Caco-2 (cell line): ENCODE measurements at regions of chr18 and their contacts with region 1.

Region 1: DNA sequence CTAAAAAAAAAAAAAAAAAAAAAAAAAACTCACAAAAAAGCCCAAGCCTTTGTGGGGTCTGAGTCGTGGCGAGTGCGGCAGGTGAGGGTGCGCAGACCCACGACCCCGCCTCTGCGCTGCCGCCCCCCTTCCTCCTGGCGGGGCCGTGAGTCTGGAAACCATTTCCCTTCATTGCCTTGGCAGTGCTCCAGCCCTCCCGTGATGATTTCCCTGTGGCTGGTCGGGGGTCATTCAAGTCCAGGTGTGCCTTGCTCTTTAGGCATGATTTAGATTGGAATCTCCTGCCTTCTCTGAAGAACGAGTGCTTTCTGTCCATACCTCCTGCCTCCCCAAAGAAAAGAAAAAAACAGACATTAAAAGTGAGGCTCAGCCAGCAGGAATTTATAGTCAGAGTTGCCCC is 161.8 kb downstream of the FAM210A start:
- DNase-seq: no peak
- H3K4me3 ChIP-seq: no peak overlapping the region
- H3K4me3 Mint-ChIP-seq: no peak overlapping the region
- H3K27ac Mint-ChIP-seq: no peak overlapping the region
- H3K4me1 ChIP-seq: no peaks in the 10 kb centered on the region
- H3K4me1 Mint-ChIP-seq: no peaks in the 10 kb centered on the region
- H3K27me3 ChIP-seq: no peaks in the 10 kb centered on the region
- H3K27me3 Mint-ChIP-seq: peaks cover 9% of the 10 kb centered on the region
- CTCF ChIP-seq: no peak

Region 2: GRCh38 chr18:13217466-13217961 is 347.1 kb before region 1 on chr18:
- CTCF ChIA-PET with region 1: no interaction called
- POLR2A ChIA-PET with region 1: no interaction called
- intact Hi-C with region 1: no loop called
- DNase-seq: peak in 1 of 2 experiments; percentile 39
- H3K4me3 ChIP-seq: peak overlapping the region; percentile 39
- H3K4me3 Mint-ChIP-seq: no peak overlapping the region
- H3K27ac Mint-ChIP-seq: no peak overlapping the region
- H3K4me1 ChIP-seq: peaks cover 12% of the 10 kb centered on the region
- H3K4me1 Mint-ChIP-seq: no peaks in the 10 kb centered on the region
- H3K27me3 ChIP-seq: peaks cover 7% of the 10 kb centered on the region
- H3K27me3 Mint-ChIP-seq: peaks cover 41% of the 10 kb centered on the region
- CTCF ChIP-seq: no peak

Region 3: DNA sequence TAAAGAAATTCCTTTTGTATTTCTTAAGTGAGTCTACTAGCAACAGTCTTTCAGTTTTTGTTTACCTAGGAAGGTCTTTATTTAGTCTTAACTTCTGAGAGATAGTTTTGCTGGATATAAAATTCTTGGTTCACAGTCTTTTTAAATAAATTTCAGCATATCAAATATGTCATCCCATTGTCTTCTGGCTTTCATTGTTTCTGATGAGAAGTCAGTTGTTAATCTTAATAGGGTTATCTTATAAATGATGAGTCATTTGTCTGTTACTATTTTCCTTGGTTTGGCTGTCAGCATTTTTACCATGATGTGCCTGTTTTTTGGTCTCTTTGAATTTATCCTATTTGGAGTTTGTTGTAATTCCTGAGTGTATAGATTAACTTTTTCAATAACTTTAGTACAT is 32.5 kb after region 1 on chr18:
- CTCF ChIA-PET with region 1: no interaction called
- POLR2A ChIA-PET with region 1: no interaction called
- intact Hi-C with region 1: loop called (anchors 1 kb)
- DNase-seq: no peak
- H3K4me3 ChIP-seq: no peak overlapping the region
- H3K4me3 Mint-ChIP-seq: no peak overlapping the region
- H3K27ac Mint-ChIP-seq: no peak overlapping the region
- H3K4me1 ChIP-seq: no peaks in the 10 kb centered on the region
- H3K4me1 Mint-ChIP-seq: no peaks in the 10 kb centered on the region
- H3K27me3 ChIP-seq: no peaks in the 10 kb centered on the region
- H3K27me3 Mint-ChIP-seq: peaks cover 7% of the 10 kb centered on the region
- CTCF ChIP-seq: no peak